ENCODE measurements at regions of chr10 and their contacts with region 1.

Region 1: GRCh38 chr10:63629363-63630084 is 108.3 kb downstream of the REEP3 start:
- DNase-seq: peak; percentile 93 to 98 (median 97)
- H3K4me3 ChIP-seq: peak overlapping the region; percentile 10 to 69 (median 65)
- H3K27ac ChIP-seq: peak overlapping the region; percentile 93 to 99 (median 96)
- H3K4me1 ChIP-seq: peaks cover 5 to 25% of the 10 kb centered on the region in 2 donors
- H3K27me3 ChIP-seq: no peaks in the 10 kb centered on the region
- CTCF ChIP-seq: peak; percentile 66 to 85 (median 80)
- POLR2A ChIP-seq: no peak

Region 2: DNA sequence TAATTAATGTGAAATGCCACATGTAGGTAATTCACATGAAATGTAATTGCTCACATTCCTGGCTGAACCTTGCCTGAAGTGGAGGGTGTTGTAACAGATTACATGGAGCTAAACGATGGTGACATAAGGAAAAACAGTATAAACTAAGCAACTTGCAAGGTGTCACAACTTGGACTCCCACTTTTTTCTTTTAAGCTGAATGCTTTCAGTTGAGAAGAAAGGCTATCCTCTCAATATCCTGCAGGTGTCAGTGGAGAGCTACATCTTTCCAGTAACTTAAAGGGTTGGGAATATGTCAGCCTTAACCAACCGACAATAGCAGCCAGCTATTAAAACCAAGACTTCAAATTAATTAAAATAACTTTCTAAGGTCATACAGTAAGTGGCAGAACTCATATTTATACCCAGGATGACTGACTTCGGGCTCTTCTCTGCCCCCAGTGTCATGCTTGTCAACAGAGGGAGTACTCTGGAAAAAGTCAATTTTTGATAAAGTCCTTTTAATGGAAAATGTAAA is 462.7 kb before region 1 on chr10:
- intact Hi-C with region 1: loop called in 1 of 2 experiments (anchors 10 kb)
- DNase-seq: peak in 3 of 7 donors; percentile 26 to 45 (median 34)
- H3K4me3 ChIP-seq: no peak overlapping the region
- H3K27ac ChIP-seq: no peak overlapping the region
- H3K4me1 ChIP-seq: peaks cover 0 to 8% of the 10 kb centered on the region in 2 donors
- H3K27me3 ChIP-seq: no peaks in the 10 kb centered on the region
- CTCF ChIP-seq: peak; percentile 60 to 89 (median 86)
- POLR2A ChIP-seq: no peak

Region 3: GRCh38 chr10:63206997-63207811 is 422.3 kb before region 1 on chr10:
- intact Hi-C with region 1: loop called in 1 of 2 experiments (anchors 10 kb)
- DNase-seq: peak in 6 of 7 donors; percentile 38 to 84 (median 66)
- H3K4me3 ChIP-seq: peak overlapping the region in 1 of 4 donors; percentile 2
- H3K27ac ChIP-seq: peak overlapping the region; percentile 34 to 82 (median 47)
- H3K4me1 ChIP-seq: peaks cover 18 to 61% of the 10 kb centered on the region in 2 donors
- H3K27me3 ChIP-seq: no peaks in the 10 kb centered on the region
- CTCF ChIP-seq: no peak
- POLR2A ChIP-seq: peak in 1 of 2 donors; percentile 6

Region 4: GRCh38 chr10:63465293-63466143 is 164.0 kb before region 1 on chr10 and contains the start of gene JMJD1C:
- intact Hi-C with region 1: loop called in 1 of 2 experiments (anchors 10 kb)
- DNase-seq: peak; percentile 78 to 84 (median 80)
- H3K4me3 ChIP-seq: peak within 1 kb of the TSS; percentile 39 to 86 (median 80)
- H3K27ac ChIP-seq: peak within 1 kb of the TSS; percentile 53 to 94 (median 91)
- H3K4me1 ChIP-seq: peaks cover 0 to 26% of the 10 kb centered on the region in 2 donors
- H3K27me3 ChIP-seq: no peaks in the 10 kb centered on the region
- CTCF ChIP-seq: peak in 1 of 6 experiments; percentile 14
- POLR2A ChIP-seq: peak; percentile 81 to 83
- total RNA-seq, gene JMJD1C: 36.0 to 124 (median 61.4) TPM

Region 5: DNA sequence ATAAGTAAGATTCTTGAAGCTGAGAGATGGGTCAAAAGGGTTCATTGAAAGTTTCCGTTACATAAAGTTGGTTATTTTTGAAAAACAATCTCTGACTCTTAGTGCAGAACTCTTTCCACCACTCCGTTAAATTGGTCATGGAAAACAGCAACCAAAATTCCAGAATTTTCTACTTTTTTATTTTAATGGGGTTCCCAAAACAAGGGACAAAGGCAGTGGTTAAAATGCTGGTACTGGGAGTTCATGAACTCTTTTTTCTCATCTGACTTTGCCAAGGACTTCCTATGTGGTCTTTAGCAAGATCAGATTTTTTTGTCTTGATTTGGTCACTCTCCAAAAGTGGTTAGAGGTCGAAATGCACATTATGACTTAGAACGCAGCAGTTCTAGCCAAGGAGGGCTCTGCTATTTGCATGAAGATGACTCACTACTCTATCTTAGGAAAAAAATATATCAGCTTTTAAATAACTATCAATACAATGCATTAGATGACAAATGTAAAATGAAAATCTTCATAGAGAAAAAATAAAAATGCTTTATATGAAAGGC is 37.4 kb after region 1 on chr10:
- intact Hi-C with region 1: no loop called
- DNase-seq: peak in 4 of 7 donors; percentile 31 to 62 (median 40)
- H3K4me3 ChIP-seq: no peak overlapping the region
- H3K27ac ChIP-seq: peak overlapping the region in 2 of 5 donors; percentile 36 to 60
- H3K4me1 ChIP-seq: peaks cover 15 to 36% of the 10 kb centered on the region in 2 donors
- H3K27me3 ChIP-seq: no peaks in the 10 kb centered on the region
- CTCF ChIP-seq: no peak
- POLR2A ChIP-seq: no peak

Region 6: DNA sequence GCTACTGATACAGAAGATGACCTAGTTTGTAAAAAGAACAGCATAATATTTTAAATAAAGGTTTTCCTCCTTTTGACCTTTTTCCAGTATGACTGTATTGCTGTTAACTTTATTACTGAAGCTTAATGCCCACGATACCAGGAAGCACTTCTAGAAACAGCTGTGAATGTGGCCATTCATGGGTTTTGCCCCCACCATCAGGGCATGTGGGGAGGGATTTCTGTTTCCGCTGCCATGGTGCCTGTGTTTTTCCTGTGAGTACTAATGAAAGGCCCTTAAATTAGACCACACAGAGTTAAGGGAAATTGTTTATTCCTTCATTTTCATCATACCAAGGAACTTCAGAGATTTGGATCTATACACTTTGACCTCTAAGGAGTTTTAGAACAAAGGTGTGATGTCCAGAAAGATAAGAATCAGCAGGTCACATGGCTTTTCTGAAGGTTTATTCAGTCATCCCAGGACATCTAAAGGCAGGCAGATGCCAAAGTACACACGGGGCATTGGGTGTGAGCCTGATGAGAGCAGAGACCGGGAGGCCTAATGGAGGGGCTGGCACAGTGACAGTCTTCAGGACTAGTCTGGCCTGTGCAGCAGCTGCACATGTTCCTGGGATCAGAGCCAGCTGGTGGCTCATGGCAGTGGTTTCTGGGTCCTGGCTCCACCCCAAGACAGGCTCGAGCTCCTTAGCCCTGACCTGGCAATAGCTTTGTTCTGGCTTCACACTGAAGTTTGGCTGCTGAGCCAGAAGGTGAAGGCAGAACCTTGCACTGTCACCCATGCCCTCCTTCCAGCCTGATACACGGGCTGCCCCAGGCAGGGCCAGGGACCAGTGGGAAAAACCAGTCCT is 82.6 kb after region 1 on chr10:
- intact Hi-C with region 1: loop called (anchors 5 to 10 kb)
- DNase-seq: peak; percentile 89 to 99 (median 97)
- H3K4me3 ChIP-seq: no peak overlapping the region
- H3K27ac ChIP-seq: peak overlapping the region; percentile 51 to 89 (median 71)
- H3K4me1 ChIP-seq: peaks cover 30 to 40% of the 10 kb centered on the region in 2 donors
- H3K27me3 ChIP-seq: no peaks in the 10 kb centered on the region
- CTCF ChIP-seq: no peak
- POLR2A ChIP-seq: no peak

Region 7: GRCh38 chr10:63720072-63720537 is 90.6 kb after region 1 on chr10:
- intact Hi-C with region 1: loop called (anchors 5 to 10 kb)
- DNase-seq: peak in 3 of 7 donors; percentile 35 to 73 (median 54)
- H3K4me3 ChIP-seq: no peak overlapping the region
- H3K27ac ChIP-seq: no peak overlapping the region
- H3K4me1 ChIP-seq: no peaks in the 10 kb centered on the region
- H3K27me3 ChIP-seq: no peaks in the 10 kb centered on the region
- CTCF ChIP-seq: peak; percentile 85 to 99 (median 95)
- POLR2A ChIP-seq: no peak

Measured in adrenal gland (tissue), 19 donors.